Caco-2 (cell line): ENCODE measurements at regions of chr3 and their contacts with region 1.

Region 1: DNA sequence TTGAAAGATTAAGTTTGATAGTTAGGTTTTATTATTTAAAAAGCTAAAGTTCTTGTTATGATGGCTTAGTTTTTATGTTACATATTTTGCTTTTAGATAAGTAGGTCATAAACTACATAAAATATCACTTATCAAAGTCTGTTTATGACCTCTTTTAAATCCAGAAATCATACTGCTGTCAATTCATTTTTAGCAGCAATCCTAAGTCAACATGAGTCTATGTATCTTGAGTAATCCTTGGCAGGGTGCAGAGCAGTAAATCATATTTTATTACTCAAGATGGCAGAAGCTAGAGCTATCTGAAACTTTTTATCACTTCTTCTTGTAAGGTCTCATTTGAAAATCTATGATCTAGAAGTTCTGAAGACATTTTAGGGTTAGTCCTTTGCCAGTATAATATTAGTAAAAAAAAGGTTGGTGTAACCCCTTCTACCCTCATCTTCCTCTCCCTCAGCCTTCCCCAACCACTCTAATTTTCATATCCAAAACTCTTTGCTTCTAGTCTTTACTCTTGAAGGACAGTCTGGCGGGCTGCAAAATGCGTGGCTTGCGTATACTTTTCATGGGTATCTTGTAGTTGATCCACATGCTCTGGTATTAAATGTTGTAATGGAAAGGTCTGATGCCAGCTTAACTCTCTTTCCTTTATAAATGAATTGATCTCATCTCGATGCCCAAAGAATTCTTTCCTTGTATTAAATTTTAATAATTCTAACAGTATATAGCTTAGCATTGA is 134.0 kb upstream of the THRB start:
- DNase-seq: peak in 1 of 2 experiments; percentile 39
- H3K4me3 ChIP-seq: no peak overlapping the region
- H3K4me3 Mint-ChIP-seq: no peak overlapping the region
- H3K27ac Mint-ChIP-seq: no peak overlapping the region
- H3K4me1 ChIP-seq: peaks cover 23% of the 10 kb centered on the region
- H3K4me1 Mint-ChIP-seq: peaks cover 13% of the 10 kb centered on the region
- H3K27me3 ChIP-seq: no peaks in the 10 kb centered on the region
- H3K27me3 Mint-ChIP-seq: no peaks in the 10 kb centered on the region
- CTCF ChIP-seq: no peak

Region 2: DNA sequence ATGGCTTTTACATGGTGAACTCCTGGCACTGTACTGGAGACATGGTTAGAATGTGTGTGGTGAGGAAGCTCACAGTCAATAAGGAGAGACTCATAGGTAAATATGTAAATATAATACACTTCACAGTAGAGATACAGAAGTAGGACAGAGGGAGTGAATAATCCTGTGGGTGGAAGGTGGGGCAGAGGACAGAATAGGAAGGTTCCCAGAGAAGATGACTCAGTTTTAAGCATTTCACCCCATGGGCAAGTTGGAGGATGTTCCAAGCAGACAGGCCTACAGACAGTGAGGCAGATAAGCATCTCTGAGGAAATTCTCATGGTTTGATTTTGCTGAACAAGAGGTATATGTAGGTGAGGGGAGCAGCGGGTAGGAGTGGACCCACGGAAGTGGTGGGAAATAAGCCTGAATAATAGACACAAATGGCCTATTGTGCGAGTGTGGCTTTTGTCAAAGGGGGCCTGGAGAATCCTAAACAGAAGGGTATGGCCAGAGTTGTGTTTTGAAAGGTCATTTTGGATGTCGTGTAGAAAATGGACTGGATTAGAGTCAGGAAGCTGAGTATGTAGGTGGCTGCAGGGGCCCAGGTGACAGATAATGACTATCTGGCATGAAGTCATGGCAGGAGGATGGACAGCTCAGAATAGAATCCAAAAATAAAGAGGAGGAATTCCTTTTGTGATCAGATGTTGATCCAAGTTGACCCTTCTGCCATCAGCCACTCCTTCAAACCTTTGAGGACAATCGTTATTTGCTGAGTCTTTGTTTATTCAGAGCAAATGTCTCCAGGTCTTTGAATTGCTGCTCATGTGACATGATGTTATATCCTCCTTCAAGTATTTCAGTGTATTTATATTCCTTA is 36.8 kb before region 1 on chr3:
- CTCF ChIA-PET with region 1: no interaction called
- POLR2A ChIA-PET with region 1: no interaction called
- intact Hi-C with region 1: loop called (anchors 1 kb)
- DNase-seq: peak; percentile 51 to 54
- H3K4me3 ChIP-seq: no peak overlapping the region
- H3K4me3 Mint-ChIP-seq: peak overlapping the region; percentile 39
- H3K27ac Mint-ChIP-seq: peak overlapping the region; percentile 33
- H3K4me1 ChIP-seq: peaks cover 41% of the 10 kb centered on the region
- H3K4me1 Mint-ChIP-seq: peaks cover 61% of the 10 kb centered on the region
- H3K27me3 ChIP-seq: no peaks in the 10 kb centered on the region
- H3K27me3 Mint-ChIP-seq: no peaks in the 10 kb centered on the region
- CTCF ChIP-seq: no peak

Region 3: GRCh38 chr3:24598695-24599470 is 29.8 kb before region 1 on chr3:
- CTCF ChIA-PET with region 1: no interaction called
- POLR2A ChIA-PET with region 1: no interaction called
- intact Hi-C with region 1: loop called (anchors 1 kb)
- DNase-seq: peak; percentile 67 to 72
- H3K4me3 ChIP-seq: no peak overlapping the region
- H3K4me3 Mint-ChIP-seq: peak overlapping the region; percentile 47
- H3K27ac Mint-ChIP-seq: peak overlapping the region; percentile 79
- H3K4me1 ChIP-seq: peaks cover 33% of the 10 kb centered on the region
- H3K4me1 Mint-ChIP-seq: peaks cover 22% of the 10 kb centered on the region
- H3K27me3 ChIP-seq: no peaks in the 10 kb centered on the region
- H3K27me3 Mint-ChIP-seq: no peaks in the 10 kb centered on the region
- CTCF ChIP-seq: no peak

Region 4: DNA sequence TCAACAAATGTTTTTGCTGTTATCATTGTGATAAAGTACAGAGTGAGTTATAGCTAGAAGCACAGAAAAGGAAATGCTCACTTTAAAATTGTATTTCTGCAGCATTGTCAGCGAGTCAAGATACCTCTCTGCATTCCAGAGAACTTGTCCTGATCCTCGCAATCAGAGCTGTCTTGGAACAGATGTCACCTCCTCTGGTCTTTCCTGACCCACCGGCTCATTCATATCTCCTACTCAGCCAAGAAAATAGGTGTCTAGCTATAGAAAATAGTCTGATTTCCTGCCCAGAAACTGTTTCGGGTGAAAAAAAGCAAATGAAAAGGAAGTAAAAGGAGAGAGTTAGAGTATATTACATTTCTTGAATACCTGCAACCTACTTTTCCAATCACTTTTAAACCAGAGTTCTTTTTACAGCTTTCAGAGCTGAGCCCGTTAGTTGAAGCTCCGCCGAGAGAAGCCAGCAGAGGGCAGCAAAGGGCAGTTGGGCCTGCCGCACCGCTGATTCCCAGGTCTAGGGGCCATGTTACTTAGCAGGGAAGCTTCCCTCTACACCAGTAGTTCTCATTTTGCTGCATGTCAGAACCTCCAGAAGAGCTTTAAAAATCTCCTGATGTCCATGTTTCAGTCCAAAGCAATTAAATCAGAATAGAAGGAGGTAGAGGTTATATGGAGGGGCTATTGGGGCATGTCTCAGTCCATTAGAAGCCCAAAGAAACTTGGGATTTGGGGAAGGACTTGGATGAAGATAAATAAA is 51.7 kb after region 1 on chr3:
- CTCF ChIA-PET with region 1: no interaction called
- POLR2A ChIA-PET with region 1: no interaction called
- intact Hi-C with region 1: no loop called
- DNase-seq: peak; percentile 48 to 75
- H3K4me3 ChIP-seq: no peak overlapping the region
- H3K4me3 Mint-ChIP-seq: no peak overlapping the region
- H3K27ac Mint-ChIP-seq: no peak overlapping the region
- H3K4me1 ChIP-seq: no peaks in the 10 kb centered on the region
- H3K4me1 Mint-ChIP-seq: no peaks in the 10 kb centered on the region
- H3K27me3 ChIP-seq: no peaks in the 10 kb centered on the region
- H3K27me3 Mint-ChIP-seq: no peaks in the 10 kb centered on the region
- CTCF ChIP-seq: peak; percentile 70 to 83